Heart right ventricle (tissue), 16 donors: ENCODE measurements at regions of chr1 and their contacts with region 1.

Region 1: DNA sequence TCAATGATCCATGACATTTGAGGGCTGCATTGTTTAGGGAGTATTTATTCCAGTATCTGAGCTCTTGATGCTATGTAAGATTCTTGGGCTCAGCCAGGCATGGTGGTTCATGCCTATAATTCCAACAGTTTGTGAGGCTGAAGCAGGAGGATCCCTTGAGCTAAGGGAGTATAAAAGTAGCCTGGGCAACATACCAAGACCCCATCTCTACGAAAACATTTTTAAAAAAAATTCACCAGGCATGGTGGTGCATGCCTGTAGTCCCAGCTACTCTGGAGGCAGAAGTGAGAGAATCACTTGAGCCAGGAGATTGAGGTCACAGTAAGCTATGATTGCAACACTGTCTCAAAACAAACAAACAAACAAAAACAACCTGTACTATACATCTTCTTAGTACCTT is 6.7 kb upstream of the PIK3C2B start:
- DNase-seq: no peak
- ATAC-seq: no peak
- H3K4me3 ChIP-seq: no peak overlapping the region
- H3K27ac ChIP-seq: no peak overlapping the region
- H3K4me1 ChIP-seq: peaks cover 0 to 36% (median 22%) of the 10 kb centered on the region in 9 donors
- H3K27me3 ChIP-seq: no peaks in the 10 kb centered on the region
- CTCF ChIP-seq: no peak

Region 2: GRCh38 chr1:203926025-203926540 is 575.2 kb before region 1 on chr1:
- intact Hi-C with region 1: no loop called
- DNase-seq: no peak
- ATAC-seq: no peak
- H3K4me3 ChIP-seq: no peak overlapping the region
- H3K27ac ChIP-seq: no peak overlapping the region
- H3K4me1 ChIP-seq: no peaks in the 10 kb centered on the region
- H3K27me3 ChIP-seq: no peaks in the 10 kb centered on the region
- CTCF ChIP-seq: no peak

Region 3: GRCh38 chr1:204446370-204447111 is 54.8 kb before region 1 on chr1:
- intact Hi-C with region 1: loop called in 9 of 10 experiments (anchors 1 to 5 kb)
- DNase-seq: peak; percentile 76 to 79
- ATAC-seq: peak; percentile 71 to 79 (median 74)
- H3K4me3 ChIP-seq: no peak overlapping the region
- H3K27ac ChIP-seq: peak overlapping the region in 7 of 10 donors; percentile 4 to 65 (median 58)
- H3K4me1 ChIP-seq: peaks cover 33 to 90% (median 54%) of the 10 kb centered on the region in 9 donors
- H3K27me3 ChIP-seq: no peaks in the 10 kb centered on the region
- CTCF ChIP-seq: peak; percentile 61 to 85 (median 78)